ENCODE measurements at regions of chr18 and their contacts with region 1.

Region 1: DNA sequence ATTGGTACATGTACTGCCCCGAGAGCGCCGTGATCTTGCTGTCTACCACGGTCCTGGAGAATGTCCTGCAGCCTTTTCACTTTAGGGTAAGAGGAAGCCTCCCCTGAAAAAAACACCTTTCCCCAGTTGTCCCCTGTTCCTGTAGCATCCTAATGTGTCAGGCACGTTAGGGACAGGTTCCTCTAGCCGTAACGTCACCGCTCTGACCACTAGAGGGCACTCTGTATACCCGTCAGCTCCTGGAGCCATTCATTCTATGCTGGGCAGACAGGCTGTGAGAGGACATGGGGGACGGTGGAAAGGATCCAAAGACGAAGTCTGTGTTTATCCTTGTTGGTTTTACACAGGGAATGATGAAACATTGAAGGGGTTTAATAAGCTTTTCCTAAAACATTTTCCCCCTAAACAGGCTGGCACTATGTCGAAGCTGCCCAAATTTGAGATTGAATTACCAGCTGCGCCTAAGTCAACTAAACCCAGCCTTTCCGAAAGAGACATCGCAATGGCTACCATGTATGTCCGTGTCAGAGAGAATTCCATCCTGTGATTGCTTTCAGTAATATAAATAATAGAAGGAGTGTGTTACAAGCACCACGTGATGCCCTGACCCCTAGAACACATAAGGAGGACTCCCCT is 12.7 kb downstream of the RMC1 start:
- DNase-seq: peak; percentile 79
- H3K4me3 Mint-ChIP-seq: no peak overlapping the region
- H3K27ac Mint-ChIP-seq: peak overlapping the region; percentile 10
- H3K4me1 Mint-ChIP-seq: peaks cover 17% of the 10 kb centered on the region
- H3K27me3 Mint-ChIP-seq: no peaks in the 10 kb centered on the region
- CTCF ChIP-seq: peak; percentile 70

Region 2: DNA sequence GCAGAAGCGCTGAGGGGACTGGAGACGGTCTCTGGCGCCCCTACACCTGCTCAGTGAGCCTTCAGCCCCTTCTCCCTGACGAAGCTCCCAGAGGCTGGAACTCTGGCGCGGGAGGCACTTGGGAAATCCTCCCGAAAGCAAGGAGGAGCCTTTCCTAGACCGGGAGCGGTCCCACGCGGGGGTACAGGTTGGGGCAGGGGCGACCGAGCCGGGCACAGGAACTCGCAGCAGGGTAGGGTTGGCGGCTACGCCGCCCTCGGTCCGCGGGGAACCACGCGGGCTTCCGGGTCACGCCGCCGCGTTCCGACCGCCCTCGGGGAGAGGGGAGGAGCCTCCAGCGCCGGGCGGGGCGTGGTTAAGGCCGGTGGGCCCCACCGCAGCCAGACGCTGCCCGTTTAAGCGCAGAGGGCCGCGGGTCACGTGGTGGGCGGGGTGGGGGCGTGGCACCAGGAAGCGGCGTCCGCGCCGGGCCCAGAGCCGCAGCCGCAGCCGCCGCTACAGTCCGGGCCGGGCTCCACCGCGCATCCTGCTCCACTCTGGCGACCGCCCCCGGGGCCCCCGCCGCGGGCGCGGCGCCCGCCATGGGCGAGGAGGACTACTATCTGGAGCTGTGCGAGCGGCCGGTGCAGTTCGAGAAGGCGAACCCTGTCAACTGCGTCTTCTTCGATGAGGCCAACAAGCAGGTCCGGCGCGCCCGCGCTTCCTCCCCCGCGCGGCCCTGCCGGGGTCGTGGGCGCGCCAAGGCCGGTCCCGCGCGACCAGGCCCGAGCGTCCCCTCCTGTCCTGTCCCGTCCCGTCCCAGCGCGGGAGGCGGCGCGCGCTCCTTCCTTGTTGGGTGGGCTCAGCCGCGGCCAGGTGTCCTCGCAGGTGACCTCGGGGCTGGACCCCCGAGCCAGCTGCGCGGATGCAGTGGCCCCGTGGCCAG is 12.7 kb before region 1 on chr18 and contains the start of gene RMC1:
- CTCF ChIA-PET with region 1: interaction called, 25 read pairs
- POLR2A ChIA-PET with region 1: interaction called, 19 read pairs
- intact Hi-C with region 1: no loop called
- DNase-seq: peak; percentile 91
- H3K4me3 Mint-ChIP-seq: peak within 1 kb of the TSS; percentile 81
- H3K27ac Mint-ChIP-seq: peak within 1 kb of the TSS; percentile 92
- H3K4me1 Mint-ChIP-seq: peaks cover 12% of the 10 kb centered on the region
- H3K27me3 Mint-ChIP-seq: no peaks in the 10 kb centered on the region
- CTCF ChIP-seq: no peak
- total RNA-seq, gene RMC1: 24.7 and 28.0 TPM in 2 replicates

Region 3: DNA sequence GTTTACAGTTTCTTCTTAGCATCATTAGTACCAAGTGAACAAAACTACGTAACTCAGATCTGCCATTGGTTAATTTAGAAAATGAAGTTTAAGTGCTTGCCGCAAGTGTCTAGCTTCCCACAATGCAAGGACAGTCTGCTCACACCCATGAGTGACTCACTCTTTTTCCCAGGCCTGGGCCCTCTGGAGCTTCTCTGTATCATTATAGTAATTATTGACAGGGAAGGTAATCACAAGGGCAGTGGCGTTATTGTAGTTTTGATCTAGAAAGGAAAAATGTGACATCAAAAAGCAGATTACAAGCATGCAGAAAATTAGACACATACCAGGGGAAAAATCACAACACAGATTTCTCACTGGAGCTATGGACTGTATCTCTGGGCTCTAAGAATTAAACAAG is 31.8 kb after region 1 on chr18:
- CTCF ChIA-PET with region 1: interaction called, 11 read pairs
- POLR2A ChIA-PET with region 1: interaction called, 3 read pairs
- intact Hi-C with region 1: no loop called
- DNase-seq: peak; percentile 70
- H3K4me3 Mint-ChIP-seq: no peak overlapping the region
- H3K27ac Mint-ChIP-seq: peak overlapping the region; percentile 74
- H3K4me1 Mint-ChIP-seq: peaks cover 12% of the 10 kb centered on the region
- H3K27me3 Mint-ChIP-seq: no peaks in the 10 kb centered on the region
- CTCF ChIP-seq: no peak

Region 4: GRCh38 chr18:23553887-23554286 is 37.9 kb after region 1 on chr18:
- CTCF ChIA-PET with region 1: interaction called, 11 read pairs
- POLR2A ChIA-PET with region 1: interaction called, 3 read pairs
- intact Hi-C with region 1: no loop called
- DNase-seq: no peak
- H3K4me3 Mint-ChIP-seq: no peak overlapping the region
- H3K27ac Mint-ChIP-seq: no peak overlapping the region
- H3K4me1 Mint-ChIP-seq: no peaks in the 10 kb centered on the region
- H3K27me3 Mint-ChIP-seq: no peaks in the 10 kb centered on the region
- CTCF ChIP-seq: no peak

Region 5: DNA sequence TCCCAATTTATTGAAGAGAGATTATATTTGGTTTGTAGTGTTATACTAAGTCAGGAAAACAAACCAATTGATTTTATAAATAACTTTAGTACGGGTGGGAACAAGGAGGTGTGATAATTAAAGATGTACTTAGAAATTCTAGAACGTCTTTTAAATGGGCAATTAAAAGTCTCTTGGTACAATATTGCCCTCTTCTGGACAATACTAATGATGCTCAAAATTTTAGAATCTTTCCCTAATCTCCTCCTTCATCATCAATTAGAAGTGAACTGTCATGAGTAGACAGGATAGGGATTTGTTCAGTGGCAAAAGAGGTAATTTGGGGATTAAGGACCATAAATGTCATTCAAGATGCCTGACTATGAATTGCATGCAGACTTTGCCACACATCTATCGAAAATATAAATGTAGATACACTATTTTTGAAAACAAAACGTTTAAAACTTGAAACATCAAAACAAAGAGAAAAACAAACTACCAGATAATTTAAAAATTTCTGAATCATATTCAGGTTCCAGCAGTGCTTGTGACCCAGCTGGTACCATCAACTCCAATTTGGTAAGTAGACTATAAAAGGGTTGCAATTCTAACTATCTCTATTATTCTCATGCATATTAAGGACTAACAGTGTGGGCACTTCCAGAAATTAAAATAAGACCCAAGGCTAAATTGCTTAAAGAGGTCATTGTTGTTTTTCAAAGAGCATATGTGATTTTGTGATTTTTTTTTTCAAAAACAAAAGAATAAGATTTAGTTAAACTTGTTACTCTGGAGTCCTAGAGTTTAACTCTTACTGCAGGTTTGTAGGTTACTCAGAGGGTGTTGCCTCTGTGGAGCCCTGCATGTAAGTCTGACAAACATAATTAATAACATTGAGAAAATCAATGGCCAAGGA is 296.8 kb after region 1 on chr18:
- CTCF ChIA-PET with region 1: interaction called, 5 read pairs
- POLR2A ChIA-PET with region 1: no interaction called
- intact Hi-C with region 1: loop called (anchors 5 kb)
- DNase-seq: peak; percentile 35
- H3K4me3 Mint-ChIP-seq: no peak overlapping the region
- H3K27ac Mint-ChIP-seq: no peak overlapping the region
- H3K4me1 Mint-ChIP-seq: no peaks in the 10 kb centered on the region
- H3K27me3 Mint-ChIP-seq: no peaks in the 10 kb centered on the region
- CTCF ChIP-seq: peak; percentile 59